ENCODE measurements at regions of chr14 and their contacts with region 1.

Region 1: DNA sequence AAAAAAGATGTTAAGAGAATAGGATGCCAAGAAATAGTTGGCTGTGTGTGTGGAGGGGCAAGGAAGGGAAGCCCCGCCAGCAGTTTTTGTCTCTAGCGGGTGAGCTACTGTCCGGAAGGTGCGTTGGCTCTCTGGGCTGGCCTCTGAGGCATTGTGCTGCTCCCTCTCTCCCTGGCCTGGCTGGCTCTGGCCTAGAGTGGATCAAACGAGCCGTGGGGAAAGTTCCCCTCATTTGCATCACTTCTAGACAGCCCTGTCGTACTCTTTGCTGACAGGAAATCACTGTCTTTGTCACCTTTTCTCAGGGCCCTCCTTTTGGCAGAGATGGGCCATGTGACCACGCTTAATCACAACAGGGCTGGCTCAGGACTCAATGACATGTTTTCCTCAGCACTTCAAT is 236.1 kb upstream of the NPAS3 start:
- DNase-seq: peak; percentile 68
- ATAC-seq: peak; percentile 77

Region 2: DNA sequence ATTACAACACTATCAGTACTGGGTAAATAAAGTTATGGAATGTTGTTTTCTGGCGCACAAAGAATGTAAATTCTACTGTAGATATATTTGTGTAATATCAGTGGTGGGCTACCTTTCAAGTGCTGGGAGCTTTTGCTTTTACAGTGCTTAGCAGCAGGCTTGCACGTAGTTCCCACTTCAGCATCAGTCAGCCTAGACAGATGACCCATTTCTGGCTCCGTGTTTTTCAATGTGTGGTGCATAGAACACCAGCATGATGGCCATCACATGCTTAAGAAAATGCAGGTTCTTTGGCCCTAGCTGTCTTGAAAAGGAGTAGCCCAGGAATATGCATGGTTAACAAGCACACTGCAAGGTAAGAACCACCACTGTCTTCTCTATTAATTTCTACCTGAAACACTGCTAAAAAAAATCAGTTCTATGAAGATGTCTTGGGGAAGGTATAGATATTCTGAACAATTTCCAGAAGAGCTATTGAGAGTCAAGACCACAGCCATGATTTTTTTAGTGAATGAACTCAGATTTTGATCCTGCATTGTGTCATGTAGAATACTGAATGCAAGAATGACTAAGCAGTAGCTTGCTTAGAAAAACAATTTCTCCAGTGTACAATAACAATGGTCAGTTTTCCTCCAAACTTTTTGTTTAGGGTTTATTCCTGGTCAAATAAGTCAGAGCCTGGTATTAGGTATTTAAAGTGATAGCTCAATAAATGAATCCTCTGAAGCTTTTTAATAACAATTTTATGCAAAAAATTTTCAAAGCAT is 177.8 kb before region 1 on chr14:
- intact Hi-C with region 1: no loop called
- DNase-seq: no peak
- ATAC-seq: no peak

Region 3: GRCh38 chr14:32627545-32628298 is 74.8 kb before region 1 on chr14:
- intact Hi-C with region 1: loop called (anchors 5 kb)
- DNase-seq: no peak
- ATAC-seq: no peak

Region 4: GRCh38 chr14:32939254-32940065 is 236.9 kb after region 1 on chr14:
- intact Hi-C with region 1: loop called (anchors 10 kb)
- DNase-seq: peak; percentile 88
- ATAC-seq: peak; percentile 95

Region 5: GRCh38 chr14:33792720-33793368 is 1090.3 kb after region 1 on chr14:
- intact Hi-C with region 1: loop called (anchors 10 kb)
- DNase-seq: peak; percentile 84
- ATAC-seq: peak; percentile 85